Activated CD4-positive, alpha-beta memory T cell treated with anti-CD3 and anti-CD28 coated beads for 36 hours (primary cell): ENCODE measurements at regions of chr12 and their contacts with region 1.

Region 1: GRCh38 chr12:51341259-51342007 is 5.0 kb downstream of the CELA1 start:
- DNase-seq: peak; percentile 78
- H3K4me3 Mint-ChIP-seq: no peak overlapping the region
- H3K27ac Mint-ChIP-seq: no peak overlapping the region
- H3K4me1 Mint-ChIP-seq: peaks cover 19% of the 10 kb centered on the region
- H3K27me3 Mint-ChIP-seq: no peaks in the 10 kb centered on the region

Region 2: GRCh38 chr12:50825372-50825838 is 516.0 kb before region 1 on chr12:
- CTCF ChIA-PET with region 1: interaction called, 11 read pairs
- POLR2A ChIA-PET with region 1: no interaction called
- intact Hi-C with region 1: loop called (anchors 2 kb)
- DNase-seq: no peak
- H3K4me3 Mint-ChIP-seq: no peak overlapping the region
- H3K27ac Mint-ChIP-seq: no peak overlapping the region
- H3K4me1 Mint-ChIP-seq: peaks cover 5% of the 10 kb centered on the region
- H3K27me3 Mint-ChIP-seq: no peaks in the 10 kb centered on the region

Region 3: DNA sequence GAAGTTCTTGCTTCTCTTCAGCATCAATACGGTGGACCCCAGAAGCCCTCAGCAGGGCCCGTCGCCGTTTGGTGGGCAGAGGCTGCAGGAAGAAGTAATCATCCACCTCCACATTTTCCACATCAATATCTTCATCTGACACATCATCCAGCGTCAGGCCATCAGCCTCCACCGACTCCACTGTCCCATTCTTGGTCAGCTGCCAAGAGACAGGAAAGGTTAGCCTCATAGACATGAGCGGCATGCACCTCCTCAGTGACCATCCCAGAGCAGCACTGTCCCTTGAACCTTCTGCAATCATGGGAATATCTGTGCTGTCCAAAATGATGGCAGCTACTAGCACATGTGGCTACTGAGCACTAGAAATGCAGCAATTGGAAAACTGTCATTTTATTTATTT is 273.7 kb before region 1 on chr12:
- CTCF ChIA-PET with region 1: no interaction called
- POLR2A ChIA-PET with region 1: no interaction called
- intact Hi-C with region 1: no loop called
- DNase-seq: no peak
- H3K4me3 Mint-ChIP-seq: no peak overlapping the region
- H3K27ac Mint-ChIP-seq: no peak overlapping the region
- H3K4me1 Mint-ChIP-seq: no peaks in the 10 kb centered on the region
- H3K27me3 Mint-ChIP-seq: no peaks in the 10 kb centered on the region

Region 4: GRCh38 chr12:51217968-51218606 is 123.3 kb before region 1 on chr12 and contains the start of gene POU6F1:
- CTCF ChIA-PET with region 1: interaction called, 14 read pairs
- POLR2A ChIA-PET with region 1: no interaction called
- intact Hi-C with region 1: no loop called
- DNase-seq: peak; percentile 77
- H3K4me3 Mint-ChIP-seq: peak within 1 kb of the TSS; percentile 79
- H3K27ac Mint-ChIP-seq: peak within 1 kb of the TSS; percentile 88
- H3K4me1 Mint-ChIP-seq: peaks cover 18% of the 10 kb centered on the region
- H3K27me3 Mint-ChIP-seq: no peaks in the 10 kb centered on the region
- total RNA-seq, gene POU6F1: 12.1 to 12.4 TPM

Region 5: DNA sequence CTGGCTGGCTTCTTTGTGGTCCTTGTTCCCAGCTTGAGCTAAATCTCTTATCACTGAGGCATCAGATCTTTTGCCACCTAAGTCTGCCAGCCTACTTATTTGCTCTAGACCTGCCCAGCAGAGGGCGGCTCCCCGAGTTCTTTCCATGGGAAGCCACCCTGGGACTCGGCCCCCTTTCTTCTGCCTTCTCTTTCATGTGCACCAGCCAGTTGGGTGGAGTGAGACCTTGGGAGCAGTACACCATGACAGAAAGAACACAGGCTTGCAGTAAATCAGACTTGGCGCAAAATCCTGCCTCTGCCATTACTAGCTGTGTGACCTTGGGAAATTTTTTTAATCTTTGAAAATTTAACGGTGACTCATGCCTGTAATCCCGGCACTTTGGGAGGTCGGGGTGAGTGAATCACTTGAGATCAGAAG is 78.7 kb before region 1 on chr12:
- CTCF ChIA-PET with region 1: interaction called, 118 read pairs
- POLR2A ChIA-PET with region 1: no interaction called
- intact Hi-C with region 1: no loop called
- DNase-seq: peak; percentile 57
- H3K4me3 Mint-ChIP-seq: no peak overlapping the region
- H3K27ac Mint-ChIP-seq: no peak overlapping the region
- H3K4me1 Mint-ChIP-seq: peaks cover 18% of the 10 kb centered on the region
- H3K27me3 Mint-ChIP-seq: no peaks in the 10 kb centered on the region

Region 6: GRCh38 chr12:51306507-51306906 is 34.9 kb before region 1 on chr12:
- CTCF ChIA-PET with region 1: interaction called, 16 read pairs
- POLR2A ChIA-PET with region 1: no interaction called
- intact Hi-C with region 1: no loop called
- DNase-seq: no peak
- H3K4me3 Mint-ChIP-seq: no peak overlapping the region
- H3K27ac Mint-ChIP-seq: no peak overlapping the region
- H3K4me1 Mint-ChIP-seq: peaks cover 39% of the 10 kb centered on the region
- H3K27me3 Mint-ChIP-seq: no peaks in the 10 kb centered on the region

Region 7: GRCh38 chr12:51351913-51352532 is 10.6 kb after region 1 on chr12:
- CTCF ChIA-PET with region 1: interaction called, 45 read pairs
- POLR2A ChIA-PET with region 1: no interaction called
- intact Hi-C with region 1: no loop called
- DNase-seq: peak; percentile 63
- H3K4me3 Mint-ChIP-seq: no peak overlapping the region
- H3K27ac Mint-ChIP-seq: no peak overlapping the region
- H3K4me1 Mint-ChIP-seq: peaks cover 3% of the 10 kb centered on the region
- H3K27me3 Mint-ChIP-seq: no peaks in the 10 kb centered on the region

Region 8: GRCh38 chr12:51441583-51441982 is 100.2 kb after region 1 on chr12:
- CTCF ChIA-PET with region 1: no interaction called
- POLR2A ChIA-PET with region 1: no interaction called
- intact Hi-C with region 1: no loop called
- DNase-seq: peak; percentile 16
- H3K4me3 Mint-ChIP-seq: no peak overlapping the region
- H3K27ac Mint-ChIP-seq: no peak overlapping the region
- H3K4me1 Mint-ChIP-seq: peaks cover 17% of the 10 kb centered on the region
- H3K27me3 Mint-ChIP-seq: no peaks in the 10 kb centered on the region

Region 9: DNA sequence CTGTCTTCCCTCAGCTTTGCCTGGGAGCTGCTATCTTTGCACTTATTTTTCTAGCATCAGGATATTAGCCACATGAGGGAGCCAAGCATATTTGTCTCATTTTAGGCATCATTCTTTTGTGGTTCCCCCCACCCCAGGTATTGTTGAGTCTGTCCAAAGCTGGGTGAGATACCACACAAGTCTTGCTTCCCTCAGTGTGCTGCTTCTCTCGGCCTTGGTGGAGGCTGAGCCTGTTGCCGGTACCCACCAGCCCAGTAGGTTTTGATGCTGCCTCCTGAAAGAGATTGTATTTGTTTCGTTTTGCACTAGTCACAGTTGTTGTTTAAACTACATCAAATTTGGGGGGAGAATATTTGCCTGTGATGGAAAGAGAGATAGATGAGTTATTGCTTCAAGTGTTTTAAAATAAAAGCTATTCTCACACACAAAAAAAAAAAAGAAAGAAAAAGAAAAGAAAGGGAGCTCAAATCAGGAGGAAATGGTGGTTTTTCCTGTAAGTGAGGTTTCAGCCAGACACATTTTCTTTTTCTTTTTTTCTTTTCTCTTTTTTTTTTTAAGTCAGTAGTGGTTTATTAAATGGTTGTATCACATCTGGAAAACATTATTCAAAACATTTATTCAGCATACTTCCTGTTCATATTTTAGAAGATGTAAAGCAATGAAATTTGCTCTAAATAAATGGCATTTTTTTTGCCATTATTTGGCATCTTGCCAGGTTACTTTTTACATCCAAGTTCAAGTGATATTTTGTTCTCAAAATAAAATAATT is 141.7 kb after region 1 on chr12:
- CTCF ChIA-PET with region 1: no interaction called
- POLR2A ChIA-PET with region 1: no interaction called
- intact Hi-C with region 1: no loop called
- DNase-seq: peak; percentile 47
- H3K4me3 Mint-ChIP-seq: peak overlapping the region; percentile 28
- H3K27ac Mint-ChIP-seq: peak overlapping the region; percentile 74
- H3K4me1 Mint-ChIP-seq: peaks cover 33% of the 10 kb centered on the region
- H3K27me3 Mint-ChIP-seq: no peaks in the 10 kb centered on the region